PC-9 (cell line): ENCODE measurements at regions of chr1 and their contacts with region 1.

Region 1: DNA sequence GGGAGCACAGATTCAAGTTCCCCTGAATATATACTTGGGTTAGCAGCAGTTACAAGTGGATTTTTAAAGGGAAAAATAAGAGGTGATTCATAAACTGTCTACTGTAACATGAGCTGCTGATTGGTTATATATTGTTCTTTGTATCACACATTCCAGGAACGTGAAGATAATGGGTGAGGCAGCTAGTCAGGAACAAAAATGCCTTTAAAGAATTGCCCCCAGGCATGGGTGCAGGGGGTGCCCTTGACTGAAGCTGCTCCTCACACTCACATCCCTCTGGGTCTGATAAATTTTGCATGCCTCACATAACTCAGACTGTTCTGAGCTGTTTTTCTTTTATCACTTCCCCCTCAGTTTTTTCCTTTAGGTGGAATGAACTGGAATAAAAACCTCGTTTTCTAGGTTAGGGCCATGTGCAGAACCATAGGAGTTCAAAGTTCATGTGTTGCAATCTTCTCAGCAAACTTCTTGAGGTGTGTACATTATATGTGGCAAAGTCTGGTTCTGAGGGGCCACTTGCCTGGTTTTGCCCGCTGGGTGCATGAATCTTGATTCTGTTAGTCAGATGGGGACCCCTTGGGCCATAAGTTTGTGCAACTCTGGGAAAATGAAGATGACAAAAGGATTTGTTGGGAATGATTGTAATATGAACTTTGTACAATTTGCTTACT is 21.1 kb downstream of the TBX19 start:
- DNase-seq: peak; percentile 88 to 98
- H3K4me3 ChIP-seq: no peak overlapping the region
- H3K27ac ChIP-seq: peak overlapping the region; percentile 81
- H3K4me1 ChIP-seq: peaks cover 40% of the 10 kb centered on the region
- H3K27me3 ChIP-seq: no peaks in the 10 kb centered on the region
- CTCF ChIP-seq: no peak

Region 2: DNA sequence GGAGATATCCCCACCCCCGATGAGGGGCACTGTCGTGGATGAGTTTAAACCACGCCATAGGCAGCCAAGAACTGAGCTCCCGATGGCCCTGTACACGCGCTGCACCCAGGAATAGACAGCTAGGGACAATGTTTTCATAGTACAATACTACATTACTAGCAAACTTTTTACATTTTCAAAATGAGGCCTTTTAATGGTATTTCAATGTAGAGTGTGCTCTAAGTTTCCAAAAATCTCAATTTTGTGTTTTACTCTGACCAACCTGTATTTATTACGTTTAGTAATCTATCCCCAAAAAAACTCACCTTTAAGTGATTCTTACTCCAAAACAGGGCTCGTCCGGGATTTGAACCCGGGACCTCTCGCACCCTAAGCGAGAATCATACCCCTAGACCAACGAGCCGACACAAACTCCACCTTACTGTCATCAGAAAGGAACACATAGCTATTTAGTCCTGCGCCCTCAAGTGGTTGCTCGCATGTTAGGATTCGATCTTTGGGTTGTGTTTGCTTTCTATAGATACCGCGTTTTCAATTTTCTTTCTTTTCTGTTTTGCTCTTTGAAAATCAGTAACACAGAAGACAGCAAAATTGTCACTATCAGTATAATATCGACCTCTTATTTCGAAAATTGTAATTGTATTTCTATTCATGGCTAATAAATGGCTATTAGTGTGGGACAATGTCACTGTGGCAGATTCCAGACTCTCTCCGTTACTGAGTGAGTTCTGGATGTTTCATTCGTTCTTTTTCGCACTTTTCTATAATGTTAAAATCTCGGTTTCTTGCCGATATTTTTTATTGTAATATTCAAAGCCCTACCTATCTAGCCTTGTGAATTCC is 586.4 kb before region 1 on chr1:
- CTCF ChIA-PET with region 1: no interaction called
- POLR2A ChIA-PET with region 1: interaction called, 11 read pairs
- intact Hi-C with region 1: no loop called
- DNase-seq: peak; percentile 81 to 85
- H3K4me3 ChIP-seq: peak overlapping the region; percentile 97
- H3K27ac ChIP-seq: peak overlapping the region; percentile 83
- H3K4me1 ChIP-seq: peaks cover 7% of the 10 kb centered on the region; the same call in 1 of the 2 replicates
- H3K27me3 ChIP-seq: no peaks in the 10 kb centered on the region
- CTCF ChIP-seq: peak; percentile 72

Region 3: DNA sequence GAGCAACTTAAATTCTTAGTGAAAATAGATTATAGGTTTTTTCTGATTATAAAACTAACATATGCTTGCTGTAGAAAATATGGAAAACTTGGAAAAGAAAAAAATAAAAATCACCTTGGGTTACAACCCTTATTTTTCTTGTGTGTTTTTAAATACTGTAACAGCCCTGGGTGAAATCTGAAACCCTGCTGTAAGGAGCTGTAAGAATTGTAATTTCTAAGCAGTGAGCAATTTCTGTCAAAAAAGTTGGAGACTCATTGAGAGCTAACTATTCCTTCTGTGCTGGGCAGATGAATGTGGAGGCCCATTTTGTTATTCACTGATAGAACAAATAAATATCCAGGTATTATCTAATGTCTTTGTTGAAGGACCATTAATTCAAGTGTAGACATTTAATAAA is 430.5 kb before region 1 on chr1:
- CTCF ChIA-PET with region 1: no interaction called
- POLR2A ChIA-PET with region 1: no interaction called
- intact Hi-C with region 1: no loop called
- DNase-seq: no peak
- H3K4me3 ChIP-seq: no peak overlapping the region
- H3K27ac ChIP-seq: no peak overlapping the region
- H3K4me1 ChIP-seq: no peaks in the 10 kb centered on the region
- H3K27me3 ChIP-seq: no peaks in the 10 kb centered on the region
- CTCF ChIP-seq: no peak

Region 4: GRCh38 chr1:168220470-168220871 is 81.3 kb before region 1 on chr1:
- CTCF ChIA-PET with region 1: no interaction called
- POLR2A ChIA-PET with region 1: interaction called, 14 read pairs
- intact Hi-C with region 1: no loop called
- DNase-seq: no peak
- H3K4me3 ChIP-seq: no peak overlapping the region
- H3K27ac ChIP-seq: no peak overlapping the region
- H3K4me1 ChIP-seq: peaks cover 22% of the 10 kb centered on the region
- H3K27me3 ChIP-seq: no peaks in the 10 kb centered on the region
- CTCF ChIP-seq: no peak

Region 5: GRCh38 chr1:168234846-168235547 is 66.8 kb before region 1 on chr1:
- CTCF ChIA-PET with region 1: interaction called, 6 read pairs
- POLR2A ChIA-PET with region 1: no interaction called
- intact Hi-C with region 1: loop called (anchors 5 kb)
- DNase-seq: no peak
- H3K4me3 ChIP-seq: no peak overlapping the region
- H3K27ac ChIP-seq: no peak overlapping the region
- H3K4me1 ChIP-seq: peaks cover 17% of the 10 kb centered on the region
- H3K27me3 ChIP-seq: no peaks in the 10 kb centered on the region
- CTCF ChIP-seq: peak; percentile 69

Region 6: GRCh38 chr1:168454211-168454815 is 152.5 kb after region 1 on chr1:
- CTCF ChIA-PET with region 1: no interaction called
- POLR2A ChIA-PET with region 1: no interaction called
- intact Hi-C with region 1: no loop called
- DNase-seq: no peak
- H3K4me3 ChIP-seq: no peak overlapping the region
- H3K27ac ChIP-seq: no peak overlapping the region
- H3K4me1 ChIP-seq: peaks cover 6% of the 10 kb centered on the region; the same call in 1 of the 2 replicates
- H3K27me3 ChIP-seq: no peaks in the 10 kb centered on the region
- CTCF ChIP-seq: no peak